HepG2 (cell line): ENCODE measurements at regions of chr11 and their contacts with region 1.

Region 1: GRCh38 chr11:62694455-62695167 is 5.3 kb upstream of the LRRN4CL start:
- DNase-seq: peak; percentile 70
- ATAC-seq: peak; percentile 86
- H3K4me3 ChIP-seq: no peak overlapping the region
- H3K27ac ChIP-seq: no peak overlapping the region
- H3K4me1 ChIP-seq: no peaks in the 10 kb centered on the region
- H3K27me3 ChIP-seq: no peaks in the 10 kb centered on the region
- CTCF ChIP-seq: peak; percentile 85
- EP300 ChIP-seq: no peak
- POLR2A ChIP-seq: no peak
- RAD21 ChIP-seq: peak; percentile 56

Region 2: GRCh38 chr11:62383822-62384221 is 310.8 kb before region 1 on chr11:
- CTCF ChIA-PET with region 1: interaction called, 3 read pairs
- POLR2A ChIA-PET with region 1: no interaction called
- in situ Hi-C with region 1: no loop called
- intact Hi-C with region 1: loop called (anchors 1 kb)
- DNase-seq: no peak
- ATAC-seq: no peak
- H3K4me3 ChIP-seq: no peak overlapping the region
- H3K27ac ChIP-seq: no peak overlapping the region
- H3K4me1 ChIP-seq: peaks cover 25% of the 10 kb centered on the region
- H3K27me3 ChIP-seq: no peaks in the 10 kb centered on the region
- CTCF ChIP-seq: no peak
- EP300 ChIP-seq: no peak
- POLR2A ChIP-seq: no peak
- RAD21 ChIP-seq: no peak